ENCODE measurements at regions of chrX and their contacts with region 1.

Region 1: GRCh38 chrX:37745354-37745753 is 34.5 kb upstream of the CYBB start:
- DNase-seq: peak; percentile 85
- ATAC-seq: peak; percentile 92
- H3K4me3 Mint-ChIP-seq: no peak overlapping the region
- H3K27ac Mint-ChIP-seq: peak overlapping the region; percentile 74
- H3K4me1 Mint-ChIP-seq: peaks cover 18% of the 10 kb centered on the region
- H3K27me3 Mint-ChIP-seq: peaks cover 6% of the 10 kb centered on the region

Region 2: GRCh38 chrX:37712458-37712857 is 32.9 kb before region 1 on chrX:
- CTCF ChIA-PET with region 1: no interaction called
- POLR2A ChIA-PET with region 1: no interaction called
- DNase-seq: no peak
- ATAC-seq: no peak
- H3K4me3 Mint-ChIP-seq: no peak overlapping the region
- H3K27ac Mint-ChIP-seq: no peak overlapping the region
- H3K4me1 Mint-ChIP-seq: no peaks in the 10 kb centered on the region
- H3K27me3 Mint-ChIP-seq: no peaks in the 10 kb centered on the region

Region 3: DNA sequence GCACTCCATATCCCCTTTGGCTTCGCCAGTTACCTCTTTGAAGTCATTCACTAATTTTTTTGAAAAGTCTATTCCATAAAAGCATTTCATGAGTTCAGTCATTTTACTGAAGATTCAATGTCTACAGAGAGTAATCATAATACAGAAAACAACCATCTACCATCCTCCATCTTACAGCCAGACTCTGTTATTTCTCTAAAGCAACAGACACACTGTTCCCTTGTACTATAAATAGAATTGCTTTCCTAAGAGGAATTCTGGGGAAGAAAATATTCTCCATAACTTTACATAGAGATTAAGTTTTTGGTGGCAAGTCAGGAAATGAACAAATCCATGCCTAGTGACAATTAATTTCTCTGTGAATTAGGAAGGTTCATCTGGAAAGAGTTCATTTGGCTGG is 22.8 kb before region 1 on chrX:
- CTCF ChIA-PET with region 1: no interaction called
- POLR2A ChIA-PET with region 1: no interaction called
- DNase-seq: no peak
- ATAC-seq: no peak
- H3K4me3 Mint-ChIP-seq: no peak overlapping the region
- H3K27ac Mint-ChIP-seq: no peak overlapping the region
- H3K4me1 Mint-ChIP-seq: no peaks in the 10 kb centered on the region
- H3K27me3 Mint-ChIP-seq: peaks cover 13% of the 10 kb centered on the region

Region 4: GRCh38 chrX:37776283-37776986 is 31.1 kb after region 1 on chrX:
- CTCF ChIA-PET with region 1: interaction called, 13 read pairs
- POLR2A ChIA-PET with region 1: no interaction called
- DNase-seq: peak; percentile 33
- ATAC-seq: peak; percentile 85
- H3K4me3 Mint-ChIP-seq: no peak overlapping the region
- H3K27ac Mint-ChIP-seq: peak overlapping the region; percentile 43
- H3K4me1 Mint-ChIP-seq: peaks cover 31% of the 10 kb centered on the region
- H3K27me3 Mint-ChIP-seq: no peaks in the 10 kb centered on the region

Region 5: DNA sequence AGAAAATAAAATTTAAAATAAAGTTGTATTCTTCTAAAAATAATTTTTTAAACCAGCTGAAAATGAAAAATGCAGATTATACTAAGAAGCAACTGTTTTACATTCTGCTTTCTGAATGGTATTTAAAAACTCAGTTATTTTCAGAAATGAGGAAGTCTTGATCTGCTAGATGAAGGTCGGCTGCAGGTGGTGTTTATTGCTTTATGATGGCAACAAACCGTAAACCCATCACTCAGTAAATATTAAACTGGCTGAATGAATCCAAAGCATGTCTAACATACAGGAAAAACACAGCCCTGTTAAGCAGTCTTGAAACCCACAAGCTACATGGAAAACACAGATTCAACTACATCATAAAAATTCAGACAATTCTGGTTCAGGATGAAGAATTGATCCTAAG is 72.7 kb after region 1 on chrX:
- CTCF ChIA-PET with region 1: interaction called, 198 read pairs
- POLR2A ChIA-PET with region 1: no interaction called
- DNase-seq: no peak
- ATAC-seq: no peak
- H3K4me3 Mint-ChIP-seq: no peak overlapping the region
- H3K27ac Mint-ChIP-seq: no peak overlapping the region
- H3K4me1 Mint-ChIP-seq: peaks cover 16% of the 10 kb centered on the region
- H3K27me3 Mint-ChIP-seq: peaks cover 2% of the 10 kb centered on the region

Region 6: DNA sequence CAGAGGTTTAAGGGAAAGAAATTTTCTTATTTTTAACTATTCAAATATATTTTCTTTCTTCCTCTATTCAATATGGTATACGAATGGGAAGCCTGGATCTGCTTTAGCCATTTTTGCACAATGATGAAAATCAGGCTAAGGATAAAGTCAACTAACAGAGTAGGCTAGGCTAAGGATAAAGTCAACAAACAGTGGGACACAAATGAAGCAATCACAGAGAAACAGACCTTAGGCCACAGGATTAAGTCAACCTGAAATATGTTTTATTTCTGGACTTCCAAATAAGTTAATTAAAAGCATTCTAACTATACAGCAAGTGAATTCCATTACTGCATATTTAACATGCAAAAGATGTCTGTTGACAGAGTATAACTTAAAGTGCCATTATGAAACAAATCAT is 85.0 kb after region 1 on chrX:
- CTCF ChIA-PET with region 1: interaction called, 198 read pairs
- POLR2A ChIA-PET with region 1: interaction called, 10 read pairs
- DNase-seq: no peak
- ATAC-seq: no peak
- H3K4me3 Mint-ChIP-seq: no peak overlapping the region
- H3K27ac Mint-ChIP-seq: no peak overlapping the region
- H3K4me1 Mint-ChIP-seq: peaks cover 9% of the 10 kb centered on the region
- H3K27me3 Mint-ChIP-seq: no peaks in the 10 kb centered on the region